ENCODE measurements at regions of chr13 and their contacts with region 1.

Region 1: GRCh38 chr13:45367358-45367757 is 26.4 kb upstream of the TPT1 start:
- DNase-seq: peak; percentile 79
- H3K4me3 ChIP-seq: no peak overlapping the region
- H3K27ac ChIP-seq: peak overlapping the region; percentile 34
- H3K4me1 ChIP-seq: peaks cover 13% of the 10 kb centered on the region
- H3K27me3 ChIP-seq: no peaks in the 10 kb centered on the region
- CTCF ChIP-seq: no peak
- POLR2A ChIP-seq: no peak

Region 2: GRCh38 chr13:45385320-45385719 is 18.0 kb after region 1 on chr13:
- CTCF ChIA-PET with region 1: interaction called, 14 read pairs
- POLR2A ChIA-PET with region 1: no interaction called
- dilution Hi-C with region 1: no loop called
- intact Hi-C with region 1: no loop called
- DNase-seq: no peak
- H3K4me3 ChIP-seq: no peak overlapping the region
- H3K27ac ChIP-seq: no peak overlapping the region
- H3K4me1 ChIP-seq: no peaks in the 10 kb centered on the region
- H3K27me3 ChIP-seq: no peaks in the 10 kb centered on the region
- CTCF ChIP-seq: no peak
- POLR2A ChIP-seq: no peak

Region 3: DNA sequence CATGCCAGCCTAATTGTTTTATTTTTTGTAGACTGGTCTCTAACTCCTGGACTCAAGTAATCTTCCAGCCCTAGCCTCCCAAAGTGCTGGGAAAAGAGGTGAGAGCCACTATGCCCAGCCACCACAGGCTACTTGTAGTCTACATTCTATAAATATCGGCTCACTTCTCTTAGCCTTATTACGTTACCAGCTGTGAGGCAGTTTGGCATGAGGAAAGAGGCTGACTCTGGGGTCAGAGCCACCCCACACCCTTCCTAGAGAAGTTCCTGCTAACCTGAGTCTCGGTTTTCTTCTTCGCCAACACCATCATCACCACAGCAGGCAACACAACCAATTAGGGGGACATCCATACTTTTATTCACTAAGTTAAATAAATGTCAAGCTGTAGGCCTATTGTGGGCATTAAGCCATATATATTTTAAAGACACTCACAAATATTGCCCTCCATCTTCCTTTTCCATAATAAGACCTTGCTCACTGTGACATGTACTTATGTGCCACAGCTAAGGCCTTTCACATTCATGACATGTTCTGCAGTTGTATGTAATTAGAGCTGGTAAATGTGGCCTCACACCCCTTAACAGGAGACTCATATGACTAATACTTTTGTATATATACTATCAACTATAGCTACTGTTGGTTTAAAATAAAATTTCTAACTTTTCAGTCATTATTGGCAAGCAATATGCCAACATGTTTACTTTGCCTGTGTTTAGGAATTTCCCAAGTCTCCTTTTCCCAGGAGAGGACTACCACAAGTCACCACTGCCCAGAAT is 45.1 kb after region 1 on chr13:
- CTCF ChIA-PET with region 1: interaction called, 11 read pairs
- POLR2A ChIA-PET with region 1: interaction called, 3 read pairs
- dilution Hi-C with region 1: no loop called
- intact Hi-C with region 1: loop called (anchors 1 kb)
- DNase-seq: peak; percentile 25
- H3K4me3 ChIP-seq: no peak overlapping the region
- H3K27ac ChIP-seq: no peak overlapping the region
- H3K4me1 ChIP-seq: peaks cover 24% of the 10 kb centered on the region
- H3K27me3 ChIP-seq: no peaks in the 10 kb centered on the region
- CTCF ChIP-seq: no peak
- POLR2A ChIP-seq: no peak

Region 4: GRCh38 chr13:45464687-45465453 is 97.5 kb after region 1 on chr13 and contains the start of gene COG3:
- CTCF ChIA-PET with region 1: interaction called, 13 read pairs
- POLR2A ChIA-PET with region 1: interaction called, 3 read pairs
- dilution Hi-C with region 1: no loop called
- intact Hi-C with region 1: loop called (anchors 1 kb)
- DNase-seq: peak; percentile 96
- H3K4me3 ChIP-seq: peak within 1 kb of the TSS; percentile 44 to 86 (median 71)
- H3K27ac ChIP-seq: peak within 1 kb of the TSS; percentile 72
- H3K4me1 ChIP-seq: peaks cover 12% of the 10 kb centered on the region
- H3K27me3 ChIP-seq: peaks cover 4 to 8% of the 10 kb centered on the region in 2 experiments
- CTCF ChIP-seq: peak in 1 of 2 donors; percentile 25
- POLR2A ChIP-seq: peak; percentile 63
- total RNA-seq, gene COG3: 27.0 and 28.7 TPM in 2 replicates

Region 5: GRCh38 chr13:45482571-45483173 is 115.3 kb after region 1 on chr13:
- CTCF ChIA-PET with region 1: interaction called, 23 read pairs
- POLR2A ChIA-PET with region 1: no interaction called
- dilution Hi-C with region 1: no loop called
- intact Hi-C with region 1: no loop called
- DNase-seq: peak; percentile 78
- H3K4me3 ChIP-seq: no peak overlapping the region
- H3K27ac ChIP-seq: peak overlapping the region; percentile 28
- H3K4me1 ChIP-seq: peaks cover 17% of the 10 kb centered on the region
- H3K27me3 ChIP-seq: no peaks in the 10 kb centered on the region
- CTCF ChIP-seq: no peak
- POLR2A ChIP-seq: no peak

Region 6: GRCh38 chr13:45511310-45512097 is 144.1 kb after region 1 on chr13:
- CTCF ChIA-PET with region 1: interaction called, 8 read pairs
- POLR2A ChIA-PET with region 1: no interaction called
- dilution Hi-C with region 1: no loop called
- intact Hi-C with region 1: loop called (anchors 1 kb)
- DNase-seq: peak; percentile 83
- H3K4me3 ChIP-seq: no peak overlapping the region
- H3K27ac ChIP-seq: peak overlapping the region; percentile 46
- H3K4me1 ChIP-seq: peaks cover 14% of the 10 kb centered on the region
- H3K27me3 ChIP-seq: no peaks in the 10 kb centered on the region
- CTCF ChIP-seq: peak; percentile 58 to 67
- POLR2A ChIP-seq: no peak

Region 7: DNA sequence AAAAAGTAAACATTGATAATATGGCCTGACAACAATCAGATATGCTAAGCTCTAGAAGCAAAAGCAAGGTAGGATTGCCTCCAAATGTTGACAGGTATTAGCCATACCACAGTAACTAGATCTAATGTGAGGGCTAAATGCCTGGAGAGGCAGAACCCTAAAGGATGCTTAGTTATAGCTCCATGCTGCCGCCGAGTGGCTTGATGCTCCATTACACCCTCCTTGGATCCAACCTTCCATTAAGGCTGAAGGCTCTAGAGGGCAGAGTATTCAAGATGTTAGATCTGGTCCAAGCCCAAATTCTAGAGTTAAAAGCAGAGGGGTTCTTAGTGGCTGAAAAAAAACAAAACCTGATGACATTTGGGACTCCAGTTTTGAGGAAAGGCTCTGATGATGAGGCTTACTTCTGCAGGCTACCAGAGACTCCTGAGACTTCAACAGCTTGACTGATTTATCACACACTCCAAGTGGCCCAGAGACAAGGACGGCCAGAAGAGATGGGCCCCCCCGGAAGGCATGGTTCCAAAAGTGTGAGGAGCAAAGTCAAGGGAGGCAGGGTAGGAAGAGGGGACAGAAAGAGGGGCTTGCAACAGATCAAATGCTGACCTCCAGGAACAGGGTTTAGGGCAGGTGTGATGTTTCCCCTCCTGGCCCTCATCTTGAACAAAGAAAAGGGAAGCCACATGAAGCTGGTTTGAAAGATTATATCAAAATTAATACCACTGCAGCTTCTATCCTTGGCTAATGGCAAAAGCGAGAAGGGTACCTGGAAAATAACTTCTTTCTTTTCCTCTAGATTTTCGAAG is 759.4 kb after region 1 on chr13:
- CTCF ChIA-PET with region 1: interaction called, 4 read pairs
- POLR2A ChIA-PET with region 1: no interaction called
- dilution Hi-C with region 1: no loop called
- intact Hi-C with region 1: loop called (anchors 5 kb)
- DNase-seq: peak; percentile 85
- H3K4me3 ChIP-seq: no peak overlapping the region
- H3K27ac ChIP-seq: no peak overlapping the region
- H3K4me1 ChIP-seq: peaks cover 22% of the 10 kb centered on the region
- H3K27me3 ChIP-seq: peaks cover 16 to 21% of the 10 kb centered on the region in 2 experiments
- CTCF ChIP-seq: peak; percentile 86 to 97
- POLR2A ChIP-seq: no peak